ENCODE measurements at regions of chr9 and their contacts with region 1.

Region 1: DNA sequence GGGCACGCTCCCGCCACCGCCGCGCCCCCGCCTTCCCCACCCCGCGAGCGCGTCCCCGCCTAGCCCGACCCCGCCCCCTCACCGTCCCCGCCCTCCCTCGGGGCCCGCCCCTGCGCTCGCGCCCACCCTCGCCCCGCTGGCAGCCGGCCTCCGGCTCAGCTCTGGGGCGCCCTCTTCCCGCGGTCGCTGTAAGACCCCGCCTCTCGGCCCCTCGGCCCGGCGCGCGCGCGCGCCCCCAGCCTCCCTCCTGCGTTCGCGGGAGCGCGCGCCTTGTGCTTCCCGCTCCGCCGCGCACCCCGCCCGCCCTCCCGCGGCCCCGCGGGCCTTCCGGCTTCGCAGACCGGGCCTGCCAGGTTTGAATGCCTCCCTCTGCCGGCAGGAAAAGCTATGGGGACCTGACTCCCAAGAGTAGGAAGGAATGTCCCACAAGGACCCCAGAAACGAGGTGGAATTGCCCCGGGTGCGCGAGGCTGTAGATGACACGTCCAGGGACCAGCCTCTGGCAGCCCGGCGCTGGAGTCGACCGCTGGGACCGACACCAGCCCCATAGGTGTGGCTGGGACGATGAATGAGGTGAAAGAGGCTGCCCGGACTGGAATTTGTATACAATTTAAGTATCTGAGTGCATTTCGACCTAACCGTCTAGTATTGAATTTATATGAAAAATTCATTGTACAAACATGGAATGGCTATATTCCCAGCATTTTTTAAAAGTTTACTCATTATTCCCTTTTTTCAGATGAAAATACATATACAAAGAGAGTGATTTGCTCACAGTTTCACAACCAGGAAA is 416 bp upstream of the PTBP3 start:
- DNase-seq: peak; percentile 90
- ATAC-seq: peak; percentile 56
- H3K4me3 ChIP-seq: peak overlapping the region; percentile 89 to 95 (median 95)
- H3K27ac ChIP-seq: peak overlapping the region; percentile 97
- H3K4me1 ChIP-seq: peaks cover 63% of the 10 kb centered on the region
- H3K27me3 ChIP-seq: no peaks in the 10 kb centered on the region
- CTCF ChIP-seq: peak; percentile 72
- EP300 ChIP-seq: no peak
- POLR2A ChIP-seq: peak; percentile 22 to 50; a peak in 2 of 4 replicates
- RAD21 ChIP-seq: peak; percentile 57

Region 2: DNA sequence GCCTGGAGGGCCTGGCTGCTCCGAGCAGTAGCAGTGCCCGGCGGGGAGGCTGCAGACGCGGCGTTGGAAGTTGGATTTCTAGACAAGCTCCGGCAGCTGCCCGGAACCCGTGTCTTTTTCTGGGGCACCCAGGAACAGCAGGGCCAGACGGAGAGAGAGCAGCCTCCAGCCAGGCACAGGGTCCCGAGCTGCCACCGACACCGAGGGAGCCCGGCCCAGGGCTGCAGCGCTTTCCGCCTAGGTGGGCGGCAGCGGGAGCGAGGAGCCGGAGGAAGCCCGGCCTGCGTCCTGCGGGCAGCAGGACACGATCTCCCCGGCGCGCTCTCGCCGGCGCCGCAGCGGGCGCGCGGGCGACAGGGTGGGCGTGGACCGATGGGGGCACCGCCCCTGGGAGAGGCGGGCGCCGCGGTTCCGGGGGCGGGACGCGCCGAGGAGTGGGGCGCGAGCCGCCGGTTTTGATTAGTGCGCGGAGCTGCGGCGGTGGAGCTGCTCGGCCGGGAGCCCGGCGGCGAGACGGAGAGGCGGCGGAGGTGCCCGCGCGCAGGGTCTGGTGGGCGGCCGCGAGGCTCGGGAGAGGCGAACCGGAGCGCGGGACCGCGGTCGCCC is 437.4 kb before region 1 on chr9 and contains the start of gene UGCG:
- CTCF ChIA-PET with region 1: no interaction called
- POLR2A ChIA-PET with region 1: no interaction called
- in situ Hi-C with region 1: no loop called
- intact Hi-C with region 1: loop called (anchors 10 kb)
- DNase-seq: peak; percentile 74
- ATAC-seq: peak; percentile 93
- H3K4me3 ChIP-seq: peak within 1 kb of the TSS; percentile 70 to 91 (median 72)
- H3K27ac ChIP-seq: peak within 1 kb of the TSS; percentile 72
- H3K4me1 ChIP-seq: peaks cover 56% of the 10 kb centered on the region
- H3K27me3 ChIP-seq: no peaks in the 10 kb centered on the region
- CTCF ChIP-seq: no peak
- EP300 ChIP-seq: 0 out of 4 replicates have a peak, but pooled peaks of 1 of the 2 experiments have one; percentile 11
- POLR2A ChIP-seq: peak; percentile 91 to 97
- RAD21 ChIP-seq: peak; percentile 49; the same call in 1 of the 2 replicates
- total RNA-seq, gene UGCG: 9.7 and 13.9 TPM in 2 replicates

Region 3: DNA sequence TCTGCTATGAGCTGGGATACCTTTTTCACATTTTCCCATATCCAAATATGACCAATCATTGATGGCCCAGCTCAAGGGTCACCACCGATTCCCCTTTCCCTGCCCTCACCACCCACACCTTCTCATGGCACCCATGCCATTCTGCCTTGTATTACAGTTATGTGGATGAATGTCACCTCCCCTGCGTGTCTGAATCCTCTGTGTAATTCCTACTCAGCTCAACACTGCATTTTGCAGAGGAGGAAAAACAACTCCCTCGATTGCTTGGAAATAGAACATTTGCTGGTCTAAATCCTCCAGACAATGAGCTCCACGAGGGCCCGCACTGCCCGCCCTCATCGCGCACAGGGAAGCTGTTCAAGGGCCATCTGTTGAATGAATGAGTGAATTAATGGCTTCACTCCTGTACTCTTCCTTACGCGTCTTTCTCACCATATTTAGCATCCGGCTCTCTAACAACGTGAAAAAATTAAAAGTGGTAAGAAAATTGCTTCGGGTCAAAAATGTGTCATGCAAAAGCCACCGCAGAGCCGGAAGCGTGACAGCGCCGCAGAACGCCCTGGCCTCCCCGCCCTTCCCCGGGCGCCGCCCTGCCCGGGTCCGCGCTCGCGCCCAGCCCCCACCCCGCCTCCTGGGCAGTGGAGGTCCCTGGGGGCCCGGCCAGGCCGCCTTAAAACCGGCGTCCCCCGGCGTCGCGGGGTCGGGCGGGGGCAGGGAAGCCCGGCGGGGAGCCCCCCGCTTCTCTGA is 159.4 kb before region 1 on chr9:
- CTCF ChIA-PET with region 1: no interaction called
- POLR2A ChIA-PET with region 1: interaction called, 5 read pairs
- in situ Hi-C with region 1: no loop called
- intact Hi-C with region 1: loop called (anchors 5 kb)
- DNase-seq: peak; percentile 44
- ATAC-seq: peak; percentile 79
- H3K4me3 ChIP-seq: peak overlapping the region; percentile 62 to 91 (median 89)
- H3K27ac ChIP-seq: peak overlapping the region; percentile 72
- H3K4me1 ChIP-seq: peaks cover 88% of the 10 kb centered on the region
- H3K27me3 ChIP-seq: no peaks in the 10 kb centered on the region; a peak in 1 of 5 replicates
- CTCF ChIP-seq: no peak
- EP300 ChIP-seq: no peak
- POLR2A ChIP-seq: no peak; a peak in 2 of 4 replicates
- RAD21 ChIP-seq: no peak; the same call in 1 of the 2 replicates

Region 4: GRCh38 chr9:112315331-112316257 is 18.2 kb before region 1 on chr9:
- CTCF ChIA-PET with region 1: no interaction called
- POLR2A ChIA-PET with region 1: interaction called, 6 read pairs
- in situ Hi-C with region 1: no loop called
- intact Hi-C with region 1: loop called (anchors 2 kb)
- DNase-seq: no peak
- ATAC-seq: no peak
- H3K4me3 ChIP-seq: peak overlapping the region in 2 of 3 experiments; percentile 62 to 63; a peak in 3 of 6 replicates
- H3K27ac ChIP-seq: peak overlapping the region; percentile 78
- H3K4me1 ChIP-seq: peaks cover 51% of the 10 kb centered on the region
- H3K27me3 ChIP-seq: no peaks in the 10 kb centered on the region
- CTCF ChIP-seq: no peak
- EP300 ChIP-seq: no peak
- POLR2A ChIP-seq: no peak
- RAD21 ChIP-seq: no peak

Region 5: DNA sequence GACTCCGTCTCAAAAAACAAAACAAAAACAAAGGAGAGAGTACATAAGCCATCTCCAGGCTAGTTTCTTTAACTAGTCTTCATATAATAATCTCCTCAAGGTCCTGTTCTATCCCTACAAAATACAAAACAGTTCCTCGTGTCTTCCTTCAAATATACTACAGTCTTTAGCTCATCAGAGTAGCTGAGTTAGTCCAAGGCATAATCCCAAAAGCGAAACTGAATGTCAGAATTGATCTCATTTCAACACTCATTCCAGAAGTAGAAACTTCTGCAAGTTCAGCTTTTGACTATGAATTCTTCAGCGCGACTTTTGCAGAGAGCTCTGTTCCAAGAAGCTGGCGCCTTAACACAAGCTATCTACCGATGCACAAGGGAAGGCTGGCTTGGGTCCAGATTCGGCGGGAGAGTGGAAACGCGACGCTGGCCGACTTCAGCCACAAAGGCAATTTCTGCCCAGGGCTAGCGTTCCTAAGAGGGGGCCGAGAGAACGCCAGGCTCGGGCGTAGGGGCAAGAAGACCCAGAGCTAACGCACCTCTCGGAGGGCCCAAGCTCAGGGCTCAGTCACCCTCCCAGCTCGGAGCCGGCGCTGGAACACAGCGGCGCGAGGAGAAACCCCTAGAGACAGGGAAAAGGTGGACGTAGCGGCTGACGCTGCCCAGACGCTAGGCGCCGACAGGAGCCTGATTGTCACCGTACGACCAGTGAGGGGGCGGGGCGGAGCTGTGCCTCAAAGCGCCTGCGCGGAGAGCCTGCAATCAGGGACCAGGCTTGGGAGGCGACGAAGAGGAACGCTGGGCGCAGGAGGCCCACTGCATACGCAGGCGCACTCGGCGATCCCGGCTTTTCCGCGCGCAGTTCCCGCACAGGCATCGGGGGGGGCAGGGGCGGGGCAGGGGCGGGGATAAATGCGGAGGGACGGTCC is 45.6 kb after region 1 on chr9:
- CTCF ChIA-PET with region 1: no interaction called
- POLR2A ChIA-PET with region 1: interaction called, 16 read pairs
- in situ Hi-C with region 1: no loop called
- intact Hi-C with region 1: no loop called
- DNase-seq: peak; percentile 96
- ATAC-seq: peak; percentile 91
- H3K4me3 ChIP-seq: peak overlapping the region; percentile 84 to 94 (median 89)
- H3K27ac ChIP-seq: peak overlapping the region; percentile 98
- H3K4me1 ChIP-seq: peaks cover 68% of the 10 kb centered on the region
- H3K27me3 ChIP-seq: no peaks in the 10 kb centered on the region; a peak in 1 of 5 replicates
- CTCF ChIP-seq: peak; percentile 47
- EP300 ChIP-seq: no peak; a peak in 1 of 4 replicates
- POLR2A ChIP-seq: peak; percentile 91 to 96
- RAD21 ChIP-seq: peak; percentile 62

Measured in HepG2 (cell line).